Activated CD4-positive, alpha-beta T cell treated with anti-CD3 and anti-CD28 coated beads for 36 hours (primary cell): ENCODE measurements at regions of chr15 and their contacts with region 1.

Region 1: DNA sequence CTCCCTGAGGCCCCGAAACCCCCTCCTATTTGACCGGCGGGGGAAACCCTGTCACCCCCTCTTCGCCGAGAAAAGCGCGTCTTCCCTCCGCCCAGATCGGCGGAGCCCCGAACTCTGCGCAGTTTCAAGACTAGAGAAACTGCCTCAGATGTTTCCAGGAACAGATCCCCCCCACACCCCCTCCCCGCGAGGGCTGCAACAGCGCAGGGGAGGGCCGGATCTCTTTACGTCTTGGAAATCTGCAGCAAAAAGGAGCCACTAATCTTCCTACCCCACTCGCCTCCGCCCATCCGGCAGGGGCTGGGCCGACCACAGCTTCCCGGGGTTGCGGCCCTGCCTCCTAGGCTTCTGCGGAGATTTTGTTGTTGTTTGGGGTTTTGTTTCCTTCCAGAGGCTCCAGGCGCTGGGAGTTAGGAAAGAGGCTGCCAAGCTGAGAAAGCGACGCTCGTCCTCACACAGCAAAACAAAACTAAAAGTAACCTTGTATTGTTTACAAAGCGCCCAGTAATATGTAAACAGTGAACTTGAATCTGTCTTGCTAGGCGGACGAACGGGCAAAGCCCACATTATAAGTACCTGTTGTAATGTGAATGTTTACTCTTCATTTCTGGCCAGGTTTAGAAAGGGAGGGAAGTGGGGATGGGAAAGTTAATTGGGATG is 2.2 kb downstream of the FOXB1 start:
- DNase-seq: peak; percentile 84
- ATAC-seq: peak; percentile 73
- H3K4me3 Mint-ChIP-seq: peak overlapping the region; percentile 81
- H3K27ac Mint-ChIP-seq: peak overlapping the region; percentile 88
- H3K4me1 Mint-ChIP-seq: peaks cover 37% of the 10 kb centered on the region
- H3K27me3 Mint-ChIP-seq: peaks cover 84% of the 10 kb centered on the region

Region 2: GRCh38 chr15:60044636-60045270 is 38.4 kb after region 1 on chr15:
- CTCF ChIA-PET with region 1: no interaction called
- POLR2A ChIA-PET with region 1: no interaction called
- intact Hi-C with region 1: loop called in 1 of 2 experiments (anchors 5 kb)
- DNase-seq: peak; percentile 52
- ATAC-seq: peak; percentile 95
- H3K4me3 Mint-ChIP-seq: peak overlapping the region; percentile 30
- H3K27ac Mint-ChIP-seq: peak overlapping the region; percentile 68
- H3K4me1 Mint-ChIP-seq: peaks cover 18% of the 10 kb centered on the region
- H3K27me3 Mint-ChIP-seq: peaks cover 8% of the 10 kb centered on the region

Region 3: GRCh38 chr15:60079210-60079609 is 72.9 kb after region 1 on chr15:
- CTCF ChIA-PET with region 1: no interaction called
- POLR2A ChIA-PET with region 1: interaction called, 5 read pairs
- intact Hi-C with region 1: loop called in 1 of 2 experiments (anchors 5 kb)
- DNase-seq: no peak
- ATAC-seq: no peak
- H3K4me3 Mint-ChIP-seq: no peak overlapping the region
- H3K27ac Mint-ChIP-seq: no peak overlapping the region
- H3K4me1 Mint-ChIP-seq: peaks cover 40% of the 10 kb centered on the region
- H3K27me3 Mint-ChIP-seq: peaks cover 8% of the 10 kb centered on the region

Region 4: DNA sequence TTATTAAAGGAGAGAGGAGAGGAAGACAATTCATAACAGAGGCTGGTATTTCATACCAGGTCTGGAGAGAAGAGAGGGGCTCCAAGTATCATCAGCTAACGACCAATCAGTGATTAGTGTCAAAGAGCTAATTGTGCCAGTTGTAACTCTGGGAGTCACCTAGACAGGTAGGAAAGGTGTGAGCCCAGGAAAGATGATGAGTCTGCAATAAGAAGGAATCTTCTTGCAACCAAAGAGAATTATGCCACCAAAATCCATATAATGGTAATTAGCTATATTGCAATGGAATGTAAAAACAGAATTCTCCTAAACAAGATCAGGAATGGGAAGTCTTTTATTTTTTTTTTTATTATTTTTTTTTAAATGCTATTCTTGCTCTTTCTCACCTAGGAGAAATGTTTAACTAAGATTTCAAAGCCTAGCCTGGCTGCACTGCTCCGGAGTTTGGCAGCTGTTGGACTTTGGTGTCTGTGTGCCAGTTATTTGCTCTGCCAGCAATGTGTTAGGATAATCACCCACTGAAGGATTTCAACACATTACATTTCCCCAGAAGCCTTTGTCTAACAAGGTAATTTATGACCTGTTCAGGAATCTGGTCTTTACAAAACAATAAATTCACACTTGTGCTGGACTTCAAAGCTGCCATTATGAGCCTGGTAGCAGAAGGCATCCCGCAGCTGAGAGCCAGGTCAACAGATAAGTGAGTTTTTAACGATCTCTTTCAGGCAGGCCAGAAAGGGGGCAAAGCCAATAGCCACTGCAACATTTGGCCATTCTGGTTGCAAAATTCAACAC is 87.1 kb after region 1 on chr15:
- CTCF ChIA-PET with region 1: no interaction called
- POLR2A ChIA-PET with region 1: no interaction called
- intact Hi-C with region 1: no loop called
- DNase-seq: no peak
- ATAC-seq: no peak
- H3K4me3 Mint-ChIP-seq: no peak overlapping the region
- H3K27ac Mint-ChIP-seq: no peak overlapping the region
- H3K4me1 Mint-ChIP-seq: no peaks in the 10 kb centered on the region
- H3K27me3 Mint-ChIP-seq: peaks cover 12% of the 10 kb centered on the region

Region 5: DNA sequence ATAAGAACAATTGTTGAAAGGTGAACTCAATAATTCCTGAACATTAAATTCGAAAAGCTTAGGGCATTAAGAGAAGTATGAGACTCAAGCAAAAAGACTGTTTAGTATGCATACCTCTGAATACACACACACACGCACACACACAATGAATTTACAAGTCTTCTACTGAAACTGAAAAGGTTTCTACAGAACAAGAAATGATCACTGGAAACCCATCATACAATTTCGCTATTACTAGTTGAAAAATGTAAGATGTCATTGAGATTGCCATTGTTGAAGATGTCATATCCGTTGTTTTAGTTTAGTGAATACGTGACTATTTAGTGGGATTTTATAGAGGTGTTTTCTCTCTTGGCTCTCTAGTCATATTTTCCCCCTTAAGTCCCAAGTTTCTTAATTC is 104.6 kb after region 1 on chr15:
- CTCF ChIA-PET with region 1: no interaction called
- POLR2A ChIA-PET with region 1: no interaction called
- intact Hi-C with region 1: loop called in 1 of 2 experiments (anchors 5 kb)
- DNase-seq: no peak
- ATAC-seq: peak; percentile 83
- H3K4me3 Mint-ChIP-seq: no peak overlapping the region
- H3K27ac Mint-ChIP-seq: peak overlapping the region; percentile 68
- H3K4me1 Mint-ChIP-seq: peaks cover 28% of the 10 kb centered on the region
- H3K27me3 Mint-ChIP-seq: peaks cover 6% of the 10 kb centered on the region

Region 6: GRCh38 chr15:60128000-60128376 is 121.7 kb after region 1 on chr15:
- CTCF ChIA-PET with region 1: interaction called, 5 read pairs
- POLR2A ChIA-PET with region 1: no interaction called
- intact Hi-C with region 1: loop called (anchors 2 kb)
- DNase-seq: no peak
- ATAC-seq: no peak
- H3K4me3 Mint-ChIP-seq: peak overlapping the region; percentile 70
- H3K27ac Mint-ChIP-seq: peak overlapping the region; percentile 85
- H3K4me1 Mint-ChIP-seq: peaks cover 54% of the 10 kb centered on the region
- H3K27me3 Mint-ChIP-seq: no peaks in the 10 kb centered on the region

Region 7: GRCh38 chr15:60162241-60162967 is 156.1 kb after region 1 on chr15:
- CTCF ChIA-PET with region 1: no interaction called
- POLR2A ChIA-PET with region 1: no interaction called
- intact Hi-C with region 1: no loop called
- DNase-seq: no peak
- ATAC-seq: no peak
- H3K4me3 Mint-ChIP-seq: no peak overlapping the region
- H3K27ac Mint-ChIP-seq: no peak overlapping the region
- H3K4me1 Mint-ChIP-seq: no peaks in the 10 kb centered on the region
- H3K27me3 Mint-ChIP-seq: peaks cover 11% of the 10 kb centered on the region

Region 8: GRCh38 chr15:60223176-60223575 is 216.8 kb after region 1 on chr15:
- CTCF ChIA-PET with region 1: no interaction called
- POLR2A ChIA-PET with region 1: no interaction called
- intact Hi-C with region 1: no loop called
- DNase-seq: no peak
- ATAC-seq: no peak
- H3K4me3 Mint-ChIP-seq: no peak overlapping the region
- H3K27ac Mint-ChIP-seq: no peak overlapping the region
- H3K4me1 Mint-ChIP-seq: no peaks in the 10 kb centered on the region
- H3K27me3 Mint-ChIP-seq: peaks cover 9% of the 10 kb centered on the region

Region 9: GRCh38 chr15:60397772-60398445 is 391.6 kb after region 1 on chr15 and contains the start of gene ANXA2:
- CTCF ChIA-PET with region 1: no interaction called
- POLR2A ChIA-PET with region 1: no interaction called
- intact Hi-C with region 1: loop called in 1 of 2 experiments (anchors 5 kb)
- DNase-seq: peak; percentile 91
- ATAC-seq: peak; percentile 74
- H3K4me3 Mint-ChIP-seq: peak within 1 kb of the TSS; percentile 83
- H3K27ac Mint-ChIP-seq: peak within 1 kb of the TSS; percentile 89
- H3K4me1 Mint-ChIP-seq: peaks cover 36% of the 10 kb centered on the region
- H3K27me3 Mint-ChIP-seq: peaks cover 4% of the 10 kb centered on the region
- total RNA-seq, gene ANXA2: 65.9 to 80.2 TPM

Region 10: GRCh38 chr15:60414016-60414682 is 407.8 kb after region 1 on chr15:
- CTCF ChIA-PET with region 1: no interaction called
- POLR2A ChIA-PET with region 1: no interaction called
- intact Hi-C with region 1: no loop called
- DNase-seq: no peak
- ATAC-seq: no peak
- H3K4me3 Mint-ChIP-seq: no peak overlapping the region
- H3K27ac Mint-ChIP-seq: no peak overlapping the region
- H3K4me1 Mint-ChIP-seq: peaks cover 1% of the 10 kb centered on the region
- H3K27me3 Mint-ChIP-seq: no peaks in the 10 kb centered on the region

Region 11: GRCh38 chr15:60478566-60479360 is 472.4 kb after region 1 on chr15 and contains the start of gene ICE2:
- CTCF ChIA-PET with region 1: no interaction called
- POLR2A ChIA-PET with region 1: no interaction called
- intact Hi-C with region 1: loop called in 1 of 2 experiments (anchors 5 kb)
- DNase-seq: peak; percentile 98
- ATAC-seq: peak; percentile 93
- H3K4me3 Mint-ChIP-seq: peak within 1 kb of the TSS; percentile 91
- H3K27ac Mint-ChIP-seq: peak within 1 kb of the TSS; percentile 98
- H3K4me1 Mint-ChIP-seq: peaks cover 55% of the 10 kb centered on the region
- H3K27me3 Mint-ChIP-seq: no peaks in the 10 kb centered on the region
- total RNA-seq, gene ICE2: 72.8 to 81.6 TPM